ENCODE measurements at regions of chr7 and their contacts with region 1.

Region 1: DNA sequence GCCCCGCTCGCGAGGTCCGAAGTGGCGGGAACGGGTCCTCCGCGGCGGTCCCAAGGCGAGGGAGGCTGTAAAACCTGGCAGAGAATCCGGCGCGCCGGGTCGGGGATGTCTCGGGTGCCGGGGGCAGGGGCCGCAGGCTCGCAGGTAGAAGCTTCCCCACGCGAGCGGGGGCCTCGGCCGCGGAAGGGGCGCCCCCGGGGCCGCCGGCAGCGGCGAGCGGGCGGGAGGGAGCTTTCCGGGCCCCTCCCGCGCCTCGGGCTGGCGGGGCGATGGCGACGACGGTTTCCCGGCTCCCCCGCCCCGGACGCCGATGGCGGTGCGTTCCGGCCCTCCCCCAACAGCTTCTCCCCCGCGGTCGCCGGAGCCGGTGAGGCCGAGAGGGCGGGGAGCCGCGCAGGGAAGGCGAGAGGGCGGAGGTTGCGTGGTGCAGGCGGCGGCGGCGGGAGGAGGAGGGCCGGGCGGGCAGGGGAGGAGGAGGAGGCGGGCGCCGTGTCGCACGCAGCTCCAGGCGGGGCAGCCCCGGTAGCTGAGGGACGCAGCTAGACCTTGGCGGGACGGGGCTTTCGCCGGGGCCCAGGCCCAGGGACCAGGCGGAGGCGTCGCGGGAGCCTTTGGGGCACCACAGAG is at the start of gene CUL1:
- DNase-seq: peak; percentile 89 to 93 (median 93)
- ATAC-seq: peak; percentile 78
- H3K4me3 ChIP-seq: peak within 1 kb of the TSS; percentile 69
- H3K27ac ChIP-seq: peak within 1 kb of the TSS; percentile 88
- H3K4me1 ChIP-seq: peaks cover 27 to 47% of the 10 kb centered on the region in 2 experiments
- H3K27me3 ChIP-seq: no peaks in the 10 kb centered on the region
- CTCF ChIP-seq: no peak
- EP300 ChIP-seq: no peak; the same call in none of the 2 replicates
- POLR2A ChIP-seq: peak; percentile 76
- RAD21 ChIP-seq: no peak
- polyA plus RNA-seq, gene CUL1: 31.5 to 43.8 TPM

Region 2: DNA sequence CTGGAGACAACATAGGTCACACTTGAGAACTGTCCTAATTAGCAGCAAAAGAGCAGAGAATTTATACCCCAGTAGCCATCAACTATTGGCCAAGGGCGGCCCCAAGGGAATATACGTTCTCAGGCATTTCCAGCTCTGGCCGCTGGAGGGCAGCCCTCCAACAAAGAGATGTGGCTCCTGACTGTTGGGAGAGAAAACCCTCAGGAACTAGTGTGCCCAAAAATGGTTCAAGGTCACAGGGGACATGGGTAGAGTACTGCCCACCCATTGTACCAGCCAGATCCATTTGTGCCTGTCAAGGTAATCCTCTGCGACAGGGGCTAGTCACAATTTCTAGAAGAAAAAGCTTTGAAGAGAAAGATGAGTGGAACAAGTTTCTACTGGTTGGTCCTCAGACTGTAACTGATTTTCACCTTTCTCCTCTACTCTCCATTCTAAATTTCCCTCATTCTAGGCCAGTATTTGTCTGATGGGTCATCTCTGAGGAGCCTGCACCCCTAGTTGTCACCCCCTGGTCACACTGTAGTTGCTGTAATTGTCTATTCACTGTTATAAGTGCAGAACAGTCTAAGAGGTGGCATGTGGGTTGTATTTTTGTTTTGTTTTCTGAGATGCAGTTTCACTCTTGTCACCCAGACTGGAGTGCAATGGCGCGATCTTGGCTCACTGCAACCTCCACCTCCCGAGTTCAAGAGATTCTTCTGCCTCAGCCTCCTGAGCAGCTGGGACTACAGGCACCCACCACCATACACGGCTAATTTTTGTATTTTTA is 122.7 kb before region 1 on chr7:
- CTCF ChIA-PET with region 1: no interaction called
- POLR2A ChIA-PET with region 1: no interaction called
- in situ Hi-C with region 1: no loop called
- intact Hi-C with region 1: loop called (anchors 5 kb)
- DNase-seq: peak; percentile 75 to 84 (median 77)
- ATAC-seq: peak; percentile 93
- H3K4me3 ChIP-seq: no peak overlapping the region
- H3K27ac ChIP-seq: no peak overlapping the region
- H3K4me1 ChIP-seq: no peaks in the 10 kb centered on the region
- H3K27me3 ChIP-seq: peaks cover 0 to 18% of the 10 kb centered on the region in 2 experiments; a peak in 2 of 5 replicates
- CTCF ChIP-seq: peak; percentile 87 to 96 (median 96)
- EP300 ChIP-seq: no peak
- POLR2A ChIP-seq: no peak
- RAD21 ChIP-seq: peak; percentile 81 to 89

Region 3: GRCh38 chr7:148650232-148650858 is 48.2 kb before region 1 on chr7:
- CTCF ChIA-PET with region 1: no interaction called
- POLR2A ChIA-PET with region 1: no interaction called
- in situ Hi-C with region 1: no loop called
- intact Hi-C with region 1: no loop called
- DNase-seq: no peak
- ATAC-seq: no peak
- H3K4me3 ChIP-seq: no peak overlapping the region
- H3K27ac ChIP-seq: no peak overlapping the region
- H3K4me1 ChIP-seq: no peaks in the 10 kb centered on the region
- H3K27me3 ChIP-seq: peaks cover 19 to 31% of the 10 kb centered on the region in 2 experiments
- CTCF ChIP-seq: no peak
- EP300 ChIP-seq: no peak
- POLR2A ChIP-seq: no peak
- RAD21 ChIP-seq: no peak

Region 4: DNA sequence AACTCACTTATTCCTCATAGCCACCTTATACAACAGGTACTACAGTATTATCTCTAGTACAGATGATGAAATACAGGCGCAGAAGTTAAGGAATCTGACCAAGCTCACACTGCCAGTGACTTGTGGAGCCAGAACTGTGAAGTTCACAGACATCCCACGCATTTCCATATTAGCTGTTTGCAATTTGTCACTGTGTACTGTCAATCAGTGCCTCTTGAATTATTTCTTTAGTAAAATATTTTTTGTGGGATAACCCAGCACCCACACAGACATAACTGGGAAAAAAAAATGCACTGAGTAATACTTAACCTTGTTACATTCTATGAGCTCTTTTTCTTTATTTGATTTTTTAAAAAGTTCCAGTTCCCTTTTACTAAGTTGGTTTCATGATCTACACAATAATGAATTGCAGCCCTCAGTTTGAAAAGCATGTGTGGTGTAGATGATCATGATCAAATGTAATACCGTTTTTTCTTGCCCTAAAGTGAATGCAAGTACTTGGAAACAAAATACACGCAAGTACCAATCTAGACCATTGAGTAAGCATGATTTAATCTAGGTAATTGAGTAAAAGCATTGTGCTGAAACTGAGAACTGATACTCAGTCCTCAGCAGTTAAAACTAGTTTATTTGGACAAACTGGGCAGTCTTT is 14.3 kb after region 1 on chr7:
- CTCF ChIA-PET with region 1: no interaction called
- POLR2A ChIA-PET with region 1: interaction called, 12 read pairs
- in situ Hi-C with region 1: no loop called
- intact Hi-C with region 1: no loop called
- DNase-seq: no peak
- ATAC-seq: peak; percentile 2; the same call in 1 of the 3 replicates
- H3K4me3 ChIP-seq: no peak overlapping the region
- H3K27ac ChIP-seq: no peak overlapping the region
- H3K4me1 ChIP-seq: peaks cover 16 to 30% of the 10 kb centered on the region in 2 experiments
- H3K27me3 ChIP-seq: no peaks in the 10 kb centered on the region
- CTCF ChIP-seq: no peak
- EP300 ChIP-seq: no peak
- POLR2A ChIP-seq: no peak
- RAD21 ChIP-seq: no peak

Region 5: DNA sequence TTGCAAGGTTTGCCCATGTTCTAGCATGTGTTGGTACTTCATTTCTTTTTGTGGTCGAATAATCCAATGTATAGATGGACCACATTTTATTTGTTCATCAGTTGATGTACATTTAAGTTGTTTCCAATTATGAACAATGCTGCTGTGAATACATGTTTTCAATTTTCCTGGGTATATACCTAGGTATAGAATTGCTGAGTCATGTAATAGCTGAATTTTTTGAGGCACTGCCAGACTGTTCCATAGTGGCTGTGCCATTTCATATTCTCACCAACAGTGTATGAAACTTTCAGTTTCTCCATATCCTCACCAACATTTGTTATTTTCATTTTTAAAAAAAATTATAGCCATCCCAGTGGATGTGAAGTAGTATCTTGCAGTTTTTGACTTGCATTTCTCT is 95.1 kb after region 1 on chr7:
- CTCF ChIA-PET with region 1: no interaction called
- POLR2A ChIA-PET with region 1: no interaction called
- in situ Hi-C with region 1: no loop called
- intact Hi-C with region 1: loop called (anchors 5 kb)
- DNase-seq: no peak
- ATAC-seq: peak; percentile 50; the same call in 2 of the 3 replicates
- H3K4me3 ChIP-seq: no peak overlapping the region
- H3K27ac ChIP-seq: peak overlapping the region; percentile 10; the same call in 1 of the 3 replicates
- H3K4me1 ChIP-seq: peaks cover 0 to 2% of the 10 kb centered on the region in 2 experiments; a peak in 2 of 5 replicates
- H3K27me3 ChIP-seq: no peaks in the 10 kb centered on the region
- CTCF ChIP-seq: no peak
- EP300 ChIP-seq: no peak
- POLR2A ChIP-seq: no peak
- RAD21 ChIP-seq: no peak

Region 6: GRCh38 chr7:148940702-148941597 is 242.4 kb after region 1 on chr7:
- CTCF ChIA-PET with region 1: no interaction called
- POLR2A ChIA-PET with region 1: interaction called, 5 read pairs
- in situ Hi-C with region 1: no loop called
- intact Hi-C with region 1: loop called (anchors 2 kb)
- DNase-seq: peak; percentile 83 to 95 (median 86)
- ATAC-seq: peak; percentile 82
- H3K4me3 ChIP-seq: peak overlapping the region; percentile 71
- H3K27ac ChIP-seq: peak overlapping the region; percentile 91
- H3K4me1 ChIP-seq: peaks cover 4 to 6% of the 10 kb centered on the region in 2 experiments; a peak in 2 of 5 replicates
- H3K27me3 ChIP-seq: no peaks in the 10 kb centered on the region
- CTCF ChIP-seq: no peak; a peak in 1 of 6 replicates
- EP300 ChIP-seq: peak; percentile 42; the same call in 1 of the 2 replicates
- POLR2A ChIP-seq: peak; percentile 96
- RAD21 ChIP-seq: no peak